GM12878 (cell line): ENCODE measurements at regions of chr22 and their contacts with region 1.

Region 1: GRCh38 chr22:36757668-36758211 is 18.2 kb downstream of the IFT27 start:
- DNase-seq: no peak
- ATAC-seq: peak; percentile 99
- H3K4me3 ChIP-seq: no peak overlapping the region
- H3K27ac ChIP-seq: no peak overlapping the region
- H3K4me1 ChIP-seq: no peaks in the 10 kb centered on the region
- H3K27me3 ChIP-seq: peaks cover 2 to 4% of the 10 kb centered on the region in 2 experiments; a peak in 2 of 4 replicates
- CTCF ChIP-seq: peak; percentile 84 to 88 (median 87)
- EP300 ChIP-seq: no peak
- POLR2A ChIP-seq: no peak
- RAD21 ChIP-seq: peak; percentile 61

Region 2: DNA sequence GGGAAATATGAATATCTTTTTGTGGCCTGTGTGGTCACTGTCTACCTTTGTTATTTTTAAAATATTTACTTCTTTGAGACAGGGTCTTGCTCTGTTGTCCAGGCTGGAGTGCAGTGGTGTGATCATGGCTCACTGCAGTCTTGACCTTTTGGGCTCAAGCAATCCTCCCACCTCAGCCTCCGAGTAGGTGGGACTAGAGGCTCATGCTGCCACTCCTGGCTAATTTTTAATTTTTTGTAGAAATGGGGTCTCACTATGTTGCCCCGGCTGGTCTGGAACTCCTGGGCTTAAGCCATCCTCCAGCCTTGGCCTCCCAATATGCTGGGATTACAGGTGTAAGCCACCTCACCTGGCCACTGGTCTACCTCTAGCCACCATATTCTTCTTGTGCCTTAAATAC is 225.3 kb before region 1 on chr22:
- CTCF ChIA-PET with region 1: no interaction called
- POLR2A ChIA-PET with region 1: no interaction called
- RAD21 ChIA-PET with region 1: no interaction called
- SMC1A ChIA-PET with region 1: no interaction called
- in situ Hi-C with region 1: no loop called
- intact Hi-C with region 1: no loop called
- DNase-seq: no peak
- ATAC-seq: no peak
- H3K4me3 ChIP-seq: no peak overlapping the region
- H3K27ac ChIP-seq: no peak overlapping the region
- H3K4me1 ChIP-seq: no peaks in the 10 kb centered on the region; the same call in 1 of the 2 replicates
- H3K27me3 ChIP-seq: peaks cover 0 to 5% of the 10 kb centered on the region in 2 experiments; a peak in 2 of 4 replicates
- CTCF ChIP-seq: no peak
- EP300 ChIP-seq: no peak
- POLR2A ChIP-seq: no peak
- RAD21 ChIP-seq: no peak

Region 3: DNA sequence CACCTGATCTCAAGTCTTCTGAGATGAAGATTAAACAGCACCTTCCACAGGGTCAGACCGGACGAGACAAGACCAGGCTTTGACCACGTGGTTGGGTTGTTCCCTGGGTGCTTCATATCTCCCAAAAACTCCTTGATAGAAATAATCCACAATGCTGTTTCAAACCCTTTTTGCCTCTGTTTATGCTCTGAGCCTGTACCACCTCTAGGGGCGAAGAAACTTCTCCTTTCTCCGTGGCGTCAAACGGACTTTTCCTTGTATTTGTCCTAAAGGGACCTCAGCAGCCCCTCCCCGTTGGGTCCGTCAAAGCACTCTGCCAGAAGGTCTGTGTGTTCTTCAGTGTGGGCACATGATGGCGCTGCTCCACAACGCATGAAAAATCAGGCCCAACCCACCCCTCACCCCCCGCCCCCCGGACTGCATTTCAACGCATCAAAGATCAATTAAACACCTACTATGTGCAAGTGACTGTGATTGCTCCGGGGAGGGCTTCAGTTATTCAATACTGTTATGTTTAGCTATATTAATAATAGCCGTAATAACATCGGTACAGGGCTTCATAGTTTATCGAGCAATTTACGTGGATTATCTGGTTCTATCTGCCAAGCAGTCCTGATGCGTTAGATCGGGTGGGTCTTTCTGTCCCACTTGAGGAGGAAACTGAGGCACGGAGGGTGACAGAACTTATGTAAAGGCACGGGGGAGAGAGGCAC is 211.5 kb before region 1 on chr22:
- CTCF ChIA-PET with region 1: interaction called, 6 read pairs
- POLR2A ChIA-PET with region 1: no interaction called
- RAD21 ChIA-PET with region 1: no interaction called
- SMC1A ChIA-PET with region 1: interaction called, 5 read pairs
- in situ Hi-C with region 1: no loop called
- intact Hi-C with region 1: loop called (anchors 5 kb)
- DNase-seq: no peak
- ATAC-seq: peak; percentile 73
- H3K4me3 ChIP-seq: no peak overlapping the region
- H3K27ac ChIP-seq: no peak overlapping the region
- H3K4me1 ChIP-seq: no peaks in the 10 kb centered on the region
- H3K27me3 ChIP-seq: no peaks in the 10 kb centered on the region
- CTCF ChIP-seq: peak; percentile 42 to 54 (median 53); a peak in 5 of 6 replicates
- EP300 ChIP-seq: no peak
- POLR2A ChIP-seq: no peak
- RAD21 ChIP-seq: peak; percentile 60

Region 4: DNA sequence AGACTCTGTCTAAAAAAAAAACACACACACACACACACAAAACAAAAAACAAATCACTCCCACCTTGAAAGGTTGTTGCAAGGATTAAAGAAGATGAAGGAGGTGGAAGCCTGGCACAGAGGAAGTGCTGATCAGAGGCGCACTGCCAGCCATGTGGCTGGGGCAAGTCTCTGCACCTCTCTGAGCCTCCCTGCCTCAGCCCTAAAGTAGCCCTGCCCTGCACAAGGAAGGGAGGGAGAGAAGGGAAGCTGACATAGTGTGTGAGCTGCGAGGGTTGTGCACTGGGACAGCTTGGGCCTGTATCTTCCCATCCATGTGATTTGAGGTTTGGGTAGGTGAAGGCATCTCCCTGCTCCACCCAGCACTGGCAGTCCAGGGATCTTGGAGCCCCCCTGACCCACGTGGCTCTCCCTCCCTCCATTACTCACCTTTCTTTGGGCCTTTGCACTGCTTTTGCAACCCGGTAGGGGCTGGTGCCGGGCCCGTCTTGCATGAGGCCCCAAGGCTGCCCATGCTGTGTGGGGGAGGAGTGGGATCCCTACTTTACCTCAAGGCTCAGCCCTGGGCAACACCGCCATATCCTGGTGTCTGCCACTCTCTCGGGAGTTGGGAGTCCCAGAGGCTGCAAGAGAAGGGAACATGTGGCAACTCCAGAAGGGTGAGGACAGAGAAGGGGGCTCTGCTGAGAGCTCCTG is 12.3 kb before region 1 on chr22:
- CTCF ChIA-PET with region 1: interaction called, 13 read pairs
- POLR2A ChIA-PET with region 1: no interaction called
- RAD21 ChIA-PET with region 1: no interaction called
- SMC1A ChIA-PET with region 1: no interaction called
- in situ Hi-C with region 1: no loop called
- intact Hi-C with region 1: no loop called
- DNase-seq: no peak
- ATAC-seq: no peak
- H3K4me3 ChIP-seq: no peak overlapping the region
- H3K27ac ChIP-seq: no peak overlapping the region
- H3K4me1 ChIP-seq: no peaks in the 10 kb centered on the region
- H3K27me3 ChIP-seq: peaks cover 1 to 2% of the 10 kb centered on the region in 2 experiments; a peak in 2 of 4 replicates
- CTCF ChIP-seq: no peak
- EP300 ChIP-seq: no peak
- POLR2A ChIP-seq: no peak
- RAD21 ChIP-seq: no peak

Region 5: GRCh38 chr22:36775964-36776669 is 18.4 kb after region 1 on chr22 and contains the start of gene IFT27:
- CTCF ChIA-PET with region 1: interaction called, 17 read pairs
- POLR2A ChIA-PET with region 1: no interaction called
- RAD21 ChIA-PET with region 1: interaction called, 3 read pairs
- SMC1A ChIA-PET with region 1: interaction called, 5 read pairs
- in situ Hi-C with region 1: no loop called
- intact Hi-C with region 1: no loop called
- DNase-seq: peak; percentile 99
- ATAC-seq: peak; percentile 97
- H3K4me3 ChIP-seq: peak within 1 kb of the TSS; percentile 87
- H3K27ac ChIP-seq: peak within 1 kb of the TSS; percentile 37; the same call in 1 of the 2 replicates
- H3K4me1 ChIP-seq: peaks cover 11% of the 10 kb centered on the region
- H3K27me3 ChIP-seq: no peaks in the 10 kb centered on the region
- CTCF ChIP-seq: no peak
- EP300 ChIP-seq: no peak
- POLR2A ChIP-seq: peak; percentile 82
- RAD21 ChIP-seq: no peak
- polyA plus RNA-seq, gene IFT27: 2.7 to 3.0 TPM

Region 6: DNA sequence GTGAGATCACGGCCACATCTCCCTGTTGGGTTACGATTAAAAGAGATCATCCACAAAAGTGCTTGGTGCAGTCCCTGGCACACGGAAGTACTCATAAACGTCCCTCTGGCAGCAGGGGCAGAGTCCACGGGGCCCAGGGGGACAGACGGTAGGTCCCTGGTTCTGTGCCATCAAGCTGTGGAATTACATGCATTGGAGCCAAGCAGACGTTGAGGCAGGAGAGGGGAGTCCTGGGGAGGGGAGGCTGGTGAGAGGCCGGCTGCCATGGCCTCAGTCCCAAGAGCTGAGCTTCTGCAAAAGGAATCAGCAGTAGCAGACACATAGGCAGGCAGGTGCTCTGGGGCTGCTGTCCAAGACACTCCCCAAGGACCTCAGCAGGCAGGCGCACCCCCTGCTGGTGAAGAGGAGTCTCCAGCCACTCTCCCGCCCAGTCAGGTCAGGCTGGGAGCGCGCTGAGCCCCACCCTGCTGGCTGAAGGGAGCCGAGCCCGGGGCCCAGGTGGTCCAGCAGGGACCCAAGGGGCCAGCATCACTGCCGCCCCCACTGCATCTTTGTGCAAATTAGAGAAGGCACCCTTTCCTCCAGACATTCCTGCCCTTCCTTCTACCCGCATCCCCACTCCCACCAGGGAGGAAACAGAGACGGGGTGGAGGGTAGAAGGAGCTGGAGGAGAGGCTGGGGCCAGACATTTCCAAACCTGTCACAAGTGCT is 286.2 kb after region 1 on chr22:
- CTCF ChIA-PET with region 1: interaction called, 24 read pairs
- POLR2A ChIA-PET with region 1: no interaction called
- RAD21 ChIA-PET with region 1: no interaction called
- SMC1A ChIA-PET with region 1: no interaction called
- in situ Hi-C with region 1: no loop called
- intact Hi-C with region 1: no loop called
- DNase-seq: no peak
- ATAC-seq: peak; percentile 99
- H3K4me3 ChIP-seq: no peak overlapping the region
- H3K27ac ChIP-seq: no peak overlapping the region
- H3K4me1 ChIP-seq: peaks cover 10% of the 10 kb centered on the region
- H3K27me3 ChIP-seq: peaks cover 0 to 2% of the 10 kb centered on the region in 2 experiments; a peak in 1 of 4 replicates
- CTCF ChIP-seq: peak; percentile 81 to 92 (median 85)
- EP300 ChIP-seq: no peak
- POLR2A ChIP-seq: no peak
- RAD21 ChIP-seq: peak; percentile 58